K562 (cell line): ENCODE measurements at regions of chr2 and their contacts with region 1.

Region 1: DNA sequence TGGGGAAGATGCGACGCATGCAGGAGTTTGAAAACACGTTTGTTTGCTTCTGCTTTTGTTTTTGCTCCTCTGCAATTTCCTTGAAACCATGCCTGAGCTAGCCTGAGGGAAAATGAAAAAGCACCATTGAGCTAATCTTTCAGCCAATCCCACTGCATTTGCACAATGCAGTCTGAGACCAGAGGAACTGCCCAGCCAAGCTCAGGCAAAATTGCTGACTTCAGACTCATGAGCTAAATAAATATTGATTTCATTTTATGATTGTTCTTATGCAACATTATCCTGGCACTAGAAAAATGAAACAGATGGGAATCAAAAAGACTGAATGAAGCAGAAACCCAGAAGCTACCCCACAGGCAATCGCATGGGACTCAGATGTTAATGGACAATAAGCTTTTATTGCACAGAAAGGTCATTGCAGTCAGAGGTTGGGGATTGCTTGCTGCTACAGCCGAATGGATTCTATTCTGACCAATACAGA is 37.0 kb downstream of the TPRKB start:
- DNase-seq: no peak
- ATAC-seq: no peak
- H3K4me3 ChIP-seq: no peak overlapping the region
- H3K27ac ChIP-seq: no peak overlapping the region
- H3K4me1 ChIP-seq: peaks cover 8 to 14% of the 10 kb centered on the region in 2 experiments; a peak in 4 of 5 replicates
- H3K27me3 ChIP-seq: no peaks in the 10 kb centered on the region
- CTCF ChIP-seq: no peak
- EP300 ChIP-seq: no peak
- POLR2A ChIP-seq: no peak
- RAD21 ChIP-seq: no peak

Region 2: DNA sequence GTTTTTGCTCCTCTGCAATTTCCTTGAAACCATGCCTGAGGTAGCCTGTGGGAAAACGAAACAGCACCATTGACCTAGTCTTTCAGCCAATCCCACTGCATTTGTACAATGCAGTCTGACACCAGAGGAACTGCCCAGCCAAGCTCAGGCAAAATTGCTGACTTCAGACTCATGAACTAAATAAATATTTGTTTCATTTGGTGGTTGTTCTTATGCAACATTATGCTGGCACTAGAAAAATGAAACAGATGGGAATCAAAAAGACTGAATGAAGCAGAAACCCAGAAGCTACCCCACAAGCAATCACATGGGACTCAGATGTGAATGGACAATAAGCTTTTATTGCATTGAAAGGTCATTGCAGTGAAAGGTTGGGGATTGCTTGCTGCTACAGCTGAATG is 59.7 kb before region 1 on chr2:
- CTCF ChIA-PET with region 1: no interaction called
- POLR2A ChIA-PET with region 1: no interaction called
- in situ Hi-C with region 1: loop called (anchors 5 kb)
- intact Hi-C with region 1: no loop called
- DNase-seq: no peak
- ATAC-seq: no peak
- H3K4me3 ChIP-seq: no peak overlapping the region
- H3K27ac ChIP-seq: no peak overlapping the region
- H3K4me1 ChIP-seq: no peaks in the 10 kb centered on the region
- H3K27me3 ChIP-seq: peaks cover 12 to 41% of the 10 kb centered on the region in 2 experiments; a peak in 4 of 5 replicates
- CTCF ChIP-seq: no peak
- EP300 ChIP-seq: no peak
- POLR2A ChIP-seq: no peak
- RAD21 ChIP-seq: no peak

Region 3: DNA sequence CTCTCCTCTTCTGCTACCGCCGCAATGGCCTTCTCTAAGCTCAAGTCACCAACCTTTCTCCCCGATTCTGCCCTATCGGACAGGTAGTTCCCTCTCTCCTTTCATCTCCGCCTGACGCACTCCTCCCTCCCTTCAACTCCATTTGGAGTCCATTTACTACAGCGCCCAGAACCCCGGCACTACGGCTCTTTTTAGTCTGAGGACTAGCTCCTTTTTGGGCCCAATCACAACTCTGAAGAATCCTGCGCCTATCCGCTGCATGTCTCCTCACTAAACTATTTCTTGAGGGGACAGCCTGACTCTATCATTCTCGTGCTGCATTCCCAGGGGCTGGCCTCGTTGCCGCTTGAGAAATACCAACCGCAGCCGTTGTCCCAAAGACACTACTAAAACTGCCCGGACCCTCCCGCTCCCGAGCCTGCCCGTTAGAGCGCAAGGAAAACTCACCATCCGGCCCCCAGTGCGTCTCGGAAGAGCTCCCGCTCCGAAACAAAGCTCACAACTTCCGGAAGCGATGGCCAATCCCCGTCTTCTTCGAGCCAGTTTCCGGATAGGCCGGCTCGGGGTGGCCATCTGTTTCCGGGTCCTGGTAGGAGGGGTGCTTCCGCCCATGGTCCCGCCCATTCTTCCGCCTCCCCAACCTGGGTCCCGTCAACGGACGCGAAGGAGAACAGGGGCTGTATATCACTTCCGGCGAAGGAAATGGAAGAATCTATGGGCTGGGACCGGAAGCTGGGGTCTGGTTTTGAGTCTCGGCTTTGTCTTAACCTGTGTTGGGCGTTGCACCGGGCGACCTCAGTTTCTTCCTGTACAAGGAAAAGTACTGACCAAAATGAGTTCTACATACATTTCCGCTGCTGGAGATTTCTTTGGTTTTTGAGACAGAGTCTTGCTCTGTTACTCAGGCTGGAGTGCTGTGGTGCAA is 36.9 kb after region 1 on chr2 and contains the start of gene TPRKB:
- CTCF ChIA-PET with region 1: no interaction called
- POLR2A ChIA-PET with region 1: interaction called, 5 read pairs
- in situ Hi-C with region 1: no loop called
- intact Hi-C with region 1: loop called (anchors 5 kb)
- DNase-seq: peak; percentile 98 to 99 (median 98)
- ATAC-seq: peak; percentile 100
- H3K4me3 ChIP-seq: peak within 1 kb of the TSS; percentile 85
- H3K27ac ChIP-seq: peak within 1 kb of the TSS; percentile 84
- H3K4me1 ChIP-seq: peaks cover 4 to 5% of the 10 kb centered on the region in 2 experiments; a peak in 4 of 5 replicates
- H3K27me3 ChIP-seq: no peaks in the 10 kb centered on the region
- CTCF ChIP-seq: no peak
- EP300 ChIP-seq: 0 out of 2 replicates have a peak, but pooled peaks have one; percentile 25
- POLR2A ChIP-seq: peak; percentile 94
- RAD21 ChIP-seq: no peak
- polyA plus RNA-seq, gene TPRKB: 193 to 250 TPM

Region 4: DNA sequence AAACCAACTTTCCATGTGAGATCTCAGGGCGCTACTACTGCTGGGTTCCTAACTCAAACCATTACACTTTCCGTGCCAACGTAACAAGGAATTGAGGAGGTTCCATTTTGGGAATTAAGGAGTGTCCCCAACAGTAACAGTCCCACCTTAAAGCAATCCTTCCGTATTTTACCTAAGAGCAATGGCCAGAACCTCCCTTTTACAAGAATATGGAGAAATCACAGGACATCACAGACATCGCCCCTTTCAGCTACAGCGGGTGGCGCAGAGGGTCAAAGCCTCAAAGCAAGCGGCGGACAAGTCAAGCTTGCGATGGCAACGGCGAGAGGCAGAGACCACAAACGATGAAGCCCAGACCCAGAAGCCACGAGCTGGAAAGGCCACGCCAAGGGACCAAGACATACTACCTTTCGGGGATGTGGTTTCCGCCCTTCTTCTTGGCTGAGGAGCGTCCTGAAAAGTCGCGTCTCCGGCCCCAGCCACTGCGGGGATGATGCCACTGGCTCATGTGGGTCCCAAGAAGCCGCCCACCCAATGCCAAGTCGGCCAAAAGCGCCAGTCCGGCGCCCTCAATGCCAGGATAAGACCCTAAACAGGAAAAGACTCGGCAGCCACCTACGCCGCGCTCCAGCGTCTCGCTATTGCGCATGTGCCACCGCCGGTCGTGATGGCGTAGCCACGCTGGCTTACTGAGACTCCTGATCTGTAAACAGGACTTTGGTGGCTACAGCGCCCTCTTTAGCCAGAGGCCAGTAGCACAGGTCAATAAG is 79.5 kb after region 1 on chr2 and contains the start of gene DUSP11:
- CTCF ChIA-PET with region 1: no interaction called
- POLR2A ChIA-PET with region 1: no interaction called
- in situ Hi-C with region 1: no loop called
- intact Hi-C with region 1: loop called (anchors 10 kb)
- DNase-seq: peak; percentile 88 to 97 (median 92)
- ATAC-seq: peak; percentile 98
- H3K4me3 ChIP-seq: peak within 1 kb of the TSS; percentile 72
- H3K27ac ChIP-seq: peak within 1 kb of the TSS; percentile 75
- H3K4me1 ChIP-seq: peaks cover 3 to 7% of the 10 kb centered on the region in 2 experiments; a peak in 4 of 5 replicates
- H3K27me3 ChIP-seq: no peaks in the 10 kb centered on the region
- CTCF ChIP-seq: peak; percentile 87 to 98 (median 96)
- EP300 ChIP-seq: peak; percentile 37; the same call in 1 of the 2 replicates
- POLR2A ChIP-seq: peak; percentile 91
- RAD21 ChIP-seq: peak; percentile 48 to 64; a peak in 3 of 4 replicates
- polyA plus RNA-seq, gene DUSP11: 67.7 to 79.8 TPM